ENCODE measurements at regions of chr3 and their contacts with region 1.

Region 1: GRCh38 chr3:12891985-12892839 is 50.8 kb upstream of the RPL32 start:
- DNase-seq: peak in 5 of 9 experiments; percentile 46 to 75 (median 64)
- ATAC-seq: peak; percentile 81
- H3K4me3 ChIP-seq: peak overlapping the region in 1 of 2 experiments; percentile 7
- H3K4me3 Mint-ChIP-seq: peak overlapping the region; percentile 56
- H3K27ac ChIP-seq: no peak overlapping the region
- H3K27ac Mint-ChIP-seq: no peak overlapping the region
- H3K4me1 ChIP-seq: peaks cover 7% of the 10 kb centered on the region
- H3K4me1 Mint-ChIP-seq: peaks cover 10% of the 10 kb centered on the region
- H3K27me3 ChIP-seq: no peaks in the 10 kb centered on the region
- H3K27me3 Mint-ChIP-seq: peaks cover 16% of the 10 kb centered on the region
- CTCF ChIP-seq: peak; percentile 93

Region 2: GRCh38 chr3:12135029-12135657 is 757.1 kb before region 1 on chr3:
- CTCF ChIA-PET with region 1: interaction called, 4 read pairs
- POLR2A ChIA-PET with region 1: no interaction called
- intact Hi-C with region 1: loop called (anchors 2 to 5 kb)
- DNase-seq: peak; percentile 12 to 66 (median 52)
- ATAC-seq: peak; percentile 75
- H3K4me3 ChIP-seq: no peak overlapping the region
- H3K4me3 Mint-ChIP-seq: no peak overlapping the region
- H3K27ac ChIP-seq: no peak overlapping the region
- H3K27ac Mint-ChIP-seq: no peak overlapping the region
- H3K4me1 ChIP-seq: no peaks in the 10 kb centered on the region
- H3K4me1 Mint-ChIP-seq: no peaks in the 10 kb centered on the region
- H3K27me3 ChIP-seq: no peaks in the 10 kb centered on the region
- H3K27me3 Mint-ChIP-seq: peaks cover 5% of the 10 kb centered on the region
- CTCF ChIP-seq: peak; percentile 63

Region 3: GRCh38 chr3:12508291-12508700 is 383.9 kb before region 1 on chr3:
- CTCF ChIA-PET with region 1: no interaction called
- POLR2A ChIA-PET with region 1: no interaction called
- intact Hi-C with region 1: no loop called
- DNase-seq: no peak
- ATAC-seq: no peak
- H3K4me3 ChIP-seq: no peak overlapping the region
- H3K4me3 Mint-ChIP-seq: no peak overlapping the region
- H3K27ac ChIP-seq: no peak overlapping the region
- H3K27ac Mint-ChIP-seq: peak overlapping the region; percentile 37
- H3K4me1 ChIP-seq: no peaks in the 10 kb centered on the region
- H3K4me1 Mint-ChIP-seq: no peaks in the 10 kb centered on the region
- H3K27me3 ChIP-seq: no peaks in the 10 kb centered on the region
- H3K27me3 Mint-ChIP-seq: no peaks in the 10 kb centered on the region
- CTCF ChIP-seq: no peak

Region 4: DNA sequence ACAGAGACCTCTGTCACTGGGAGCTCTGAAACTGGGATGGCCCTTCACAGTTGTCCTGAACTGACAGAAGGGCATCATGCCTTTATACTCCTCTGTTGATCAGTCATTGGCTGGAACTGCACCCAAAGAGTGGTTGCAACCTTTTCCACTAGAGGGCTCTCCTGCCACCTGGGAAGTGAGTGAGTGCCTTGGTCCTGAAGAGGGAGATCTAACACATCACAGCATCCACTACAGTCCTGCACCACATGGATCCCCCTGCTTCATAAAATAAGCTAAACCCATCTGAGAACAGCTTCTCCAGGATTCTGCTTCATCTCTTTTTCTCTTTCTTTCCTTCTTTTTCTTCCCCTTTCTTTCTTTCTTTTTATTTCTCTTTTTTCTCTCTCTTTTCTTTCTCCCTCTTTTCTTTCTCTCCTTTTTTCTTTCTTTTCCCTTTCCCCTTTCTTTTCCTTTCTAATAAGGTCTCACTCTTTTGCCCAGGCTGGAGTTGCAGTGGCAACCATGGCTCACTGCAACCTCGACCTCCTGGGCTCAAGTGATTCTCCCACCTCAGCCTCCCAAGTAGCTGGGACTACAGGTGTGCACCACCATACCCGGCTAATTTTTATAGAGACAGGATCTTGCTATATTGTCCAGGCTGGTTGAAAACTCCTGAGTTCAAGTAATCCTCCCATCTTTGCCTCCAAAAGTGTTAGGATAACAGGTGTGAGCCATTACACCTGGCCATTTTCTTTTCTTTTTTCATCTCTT is 185.5 kb before region 1 on chr3:
- CTCF ChIA-PET with region 1: interaction called, 4 read pairs
- POLR2A ChIA-PET with region 1: no interaction called
- intact Hi-C with region 1: loop called in 1 of 2 experiments (anchors 5 kb)
- DNase-seq: peak; percentile 5 to 73 (median 53)
- ATAC-seq: peak; percentile 98
- H3K4me3 ChIP-seq: no peak overlapping the region
- H3K4me3 Mint-ChIP-seq: no peak overlapping the region
- H3K27ac ChIP-seq: no peak overlapping the region
- H3K27ac Mint-ChIP-seq: no peak overlapping the region
- H3K4me1 ChIP-seq: no peaks in the 10 kb centered on the region
- H3K4me1 Mint-ChIP-seq: no peaks in the 10 kb centered on the region
- H3K27me3 ChIP-seq: no peaks in the 10 kb centered on the region
- H3K27me3 Mint-ChIP-seq: peaks cover 7% of the 10 kb centered on the region
- CTCF ChIP-seq: peak; percentile 61

Region 5: DNA sequence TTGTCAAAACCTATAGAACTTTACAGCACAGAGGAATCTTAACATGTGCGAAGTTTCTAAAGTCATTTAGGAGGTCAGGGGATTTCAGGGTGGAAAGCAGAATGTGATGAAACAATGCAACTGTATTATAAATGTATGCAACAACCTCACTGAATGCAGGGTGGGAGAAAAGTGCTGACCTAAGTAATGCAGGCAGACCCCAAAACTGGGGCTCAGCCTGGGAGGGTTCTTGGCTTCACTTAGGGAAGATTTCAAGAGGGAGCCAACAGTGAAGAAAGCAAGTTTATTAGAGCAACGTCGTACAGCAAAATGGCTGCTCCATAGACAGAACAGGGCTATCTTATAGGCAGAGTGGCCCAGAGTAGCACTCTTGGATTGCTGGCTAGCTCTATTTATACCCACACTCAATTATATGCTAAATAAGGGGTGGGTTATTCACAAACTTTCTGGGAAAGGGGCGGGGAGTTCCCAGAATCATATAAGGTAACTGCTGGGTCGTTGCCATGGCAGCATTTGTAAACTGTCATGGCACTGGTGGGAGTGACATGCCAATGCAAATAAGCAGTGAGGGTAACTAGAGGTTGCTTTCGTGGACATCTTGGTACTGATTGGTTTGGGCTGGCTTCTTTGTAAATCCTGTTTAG is 109.9 kb before region 1 on chr3:
- CTCF ChIA-PET with region 1: interaction called, 27 read pairs
- POLR2A ChIA-PET with region 1: no interaction called
- intact Hi-C with region 1: loop called (anchors 1 kb)
- DNase-seq: peak in 1 of 9 experiments; percentile 24
- ATAC-seq: no peak
- H3K4me3 ChIP-seq: no peak overlapping the region
- H3K4me3 Mint-ChIP-seq: no peak overlapping the region
- H3K27ac ChIP-seq: no peak overlapping the region
- H3K27ac Mint-ChIP-seq: no peak overlapping the region
- H3K4me1 ChIP-seq: no peaks in the 10 kb centered on the region
- H3K4me1 Mint-ChIP-seq: no peaks in the 10 kb centered on the region
- H3K27me3 ChIP-seq: peaks cover 0 to 3% of the 10 kb centered on the region in 2 experiments
- H3K27me3 Mint-ChIP-seq: peaks cover 26% of the 10 kb centered on the region
- CTCF ChIP-seq: no peak

Region 6: DNA sequence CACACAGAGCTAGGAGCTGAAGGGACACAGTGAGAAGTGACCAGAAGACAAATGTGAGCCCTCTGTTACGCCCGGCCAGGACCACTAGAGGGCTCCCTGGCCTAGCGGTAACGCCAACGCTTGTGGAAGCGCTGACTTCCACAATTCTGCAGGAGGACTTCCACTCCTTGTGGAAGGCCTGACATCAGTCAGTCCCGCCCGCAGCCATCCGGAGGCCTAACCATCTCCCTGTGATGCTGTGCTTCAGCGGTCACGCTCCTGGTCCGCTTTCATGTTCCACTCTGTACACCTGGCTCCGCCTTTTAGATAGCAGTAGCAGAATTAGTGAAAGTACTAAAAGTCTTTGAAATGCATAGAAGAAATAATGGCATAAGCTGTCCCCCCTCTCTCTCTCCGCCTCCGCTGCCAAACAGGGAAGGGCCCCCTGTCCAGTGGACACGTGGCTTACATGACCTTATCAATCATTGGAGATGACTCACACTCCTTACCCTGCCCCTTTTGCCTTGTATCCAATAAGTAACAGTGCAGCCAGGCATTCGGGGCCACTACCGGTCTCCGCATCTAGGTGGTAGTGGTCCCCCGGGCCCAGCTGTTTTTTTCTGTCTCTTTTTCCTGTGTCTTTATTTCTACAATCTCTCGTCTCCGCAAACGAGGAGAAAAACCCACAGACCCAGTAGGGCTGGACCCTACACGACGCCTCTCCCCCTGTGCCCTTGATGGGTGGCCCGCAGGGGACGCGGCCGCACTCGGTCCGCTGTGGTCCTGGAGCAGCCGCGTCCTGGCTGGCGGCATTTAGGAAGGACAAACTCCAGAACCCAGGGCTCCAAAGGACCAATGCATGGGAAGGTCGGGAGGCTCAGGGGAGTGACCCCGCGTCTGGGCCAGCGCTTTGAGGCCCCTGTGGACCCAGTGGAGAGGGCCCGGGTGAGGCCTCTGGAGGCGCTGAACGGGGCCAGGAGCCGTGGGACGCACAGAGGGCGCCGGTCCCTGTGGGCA is 23.9 kb before region 1 on chr3:
- CTCF ChIA-PET with region 1: interaction called, 39 read pairs
- POLR2A ChIA-PET with region 1: no interaction called
- intact Hi-C with region 1: loop called (anchors 1 kb)
- DNase-seq: peak in 8 of 9 experiments; percentile 39 to 78 (median 60)
- ATAC-seq: peak; percentile 72
- H3K4me3 ChIP-seq: peak overlapping the region; percentile 42 to 47
- H3K4me3 Mint-ChIP-seq: peak overlapping the region; percentile 78
- H3K27ac ChIP-seq: no peak overlapping the region
- H3K27ac Mint-ChIP-seq: no peak overlapping the region
- H3K4me1 ChIP-seq: peaks cover 9% of the 10 kb centered on the region
- H3K4me1 Mint-ChIP-seq: peaks cover 13% of the 10 kb centered on the region
- H3K27me3 ChIP-seq: peaks cover 3 to 9% of the 10 kb centered on the region in 2 experiments
- H3K27me3 Mint-ChIP-seq: peaks cover 17% of the 10 kb centered on the region
- CTCF ChIP-seq: peak; percentile 73

Region 7: DNA sequence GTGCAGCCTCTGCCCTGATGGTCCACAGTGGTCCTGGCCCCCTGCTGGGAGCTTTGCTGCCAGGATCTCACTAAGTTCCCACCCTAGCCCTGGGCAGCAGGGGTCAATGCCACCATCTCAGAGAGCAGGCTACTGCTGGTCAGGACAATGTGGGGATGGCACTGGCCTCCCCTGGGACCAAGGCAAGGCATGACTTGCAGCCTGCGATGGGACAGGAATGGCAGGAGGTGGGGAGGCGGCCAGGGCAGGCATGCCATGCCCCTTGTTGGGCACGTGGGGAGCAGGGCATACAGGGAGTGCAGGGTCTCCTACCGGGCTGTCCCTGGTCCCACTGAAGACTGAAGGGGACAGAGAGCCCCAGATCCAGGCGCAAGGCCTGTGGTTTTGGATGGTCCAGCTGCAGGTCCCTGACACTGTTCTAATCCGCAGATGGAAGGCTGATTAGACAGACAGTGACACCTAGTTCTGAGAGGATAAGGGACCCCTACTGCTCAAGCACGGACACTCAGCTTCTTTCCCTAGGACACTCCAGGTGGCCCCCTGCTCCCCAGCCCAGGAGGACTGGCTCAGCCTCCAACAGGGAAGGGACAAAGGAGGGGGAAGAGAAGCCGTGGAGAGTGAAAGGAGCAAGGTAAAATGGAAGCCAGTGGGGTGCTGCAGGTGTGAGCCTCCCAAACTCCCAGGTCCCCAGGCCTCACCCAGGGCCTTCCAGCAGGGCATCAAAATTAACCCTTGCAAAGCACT is 18.3 kb after region 1 on chr3:
- CTCF ChIA-PET with region 1: interaction called, 11 read pairs
- POLR2A ChIA-PET with region 1: no interaction called
- intact Hi-C with region 1: no loop called
- DNase-seq: no peak
- ATAC-seq: no peak
- H3K4me3 ChIP-seq: no peak overlapping the region
- H3K4me3 Mint-ChIP-seq: no peak overlapping the region
- H3K27ac ChIP-seq: no peak overlapping the region
- H3K27ac Mint-ChIP-seq: no peak overlapping the region
- H3K4me1 ChIP-seq: peaks cover 7% of the 10 kb centered on the region
- H3K4me1 Mint-ChIP-seq: peaks cover 5% of the 10 kb centered on the region
- H3K27me3 ChIP-seq: no peaks in the 10 kb centered on the region
- H3K27me3 Mint-ChIP-seq: no peaks in the 10 kb centered on the region
- CTCF ChIP-seq: no peak

Region 8: GRCh38 chr3:12984023-12984823 is 92.0 kb after region 1 on chr3:
- CTCF ChIA-PET with region 1: interaction called, 14 read pairs
- POLR2A ChIA-PET with region 1: no interaction called
- intact Hi-C with region 1: no loop called
- DNase-seq: peak in 8 of 9 experiments; percentile 40 to 77 (median 63)
- ATAC-seq: peak; percentile 89
- H3K4me3 ChIP-seq: no peak overlapping the region
- H3K4me3 Mint-ChIP-seq: no peak overlapping the region
- H3K27ac ChIP-seq: peak overlapping the region in 1 of 2 experiments; percentile 36
- H3K27ac Mint-ChIP-seq: no peak overlapping the region
- H3K4me1 ChIP-seq: peaks cover 43% of the 10 kb centered on the region
- H3K4me1 Mint-ChIP-seq: peaks cover 54% of the 10 kb centered on the region
- H3K27me3 ChIP-seq: no peaks in the 10 kb centered on the region
- H3K27me3 Mint-ChIP-seq: no peaks in the 10 kb centered on the region
- CTCF ChIP-seq: peak; percentile 63

Measured in CD8-positive, alpha-beta T cell (primary cell).